H1 (cell line): ENCODE measurements at regions of chr10 and their contacts with region 1.

Region 1: DNA sequence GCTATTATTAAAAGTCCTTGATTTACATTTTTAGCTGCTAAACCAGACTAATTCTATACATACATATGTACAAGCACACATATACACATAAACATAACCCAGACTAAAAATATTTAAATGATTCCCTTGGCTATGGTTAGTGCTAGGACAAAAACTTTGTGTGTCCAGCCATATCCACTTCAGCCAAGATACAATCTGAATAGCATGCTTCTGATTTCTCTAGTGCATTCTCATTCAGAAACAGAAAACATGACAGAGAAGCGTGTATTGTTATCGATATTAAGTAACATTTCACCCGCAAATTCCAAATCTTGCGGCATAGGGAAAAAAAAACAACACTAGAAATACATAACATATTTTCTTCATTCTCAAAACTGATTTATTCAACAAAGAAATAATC is 569.3 kb downstream of the KCNMA1 start:
- DNase-seq: no peak
- H3K4me3 ChIP-seq: no peak overlapping the region
- H3K27ac ChIP-seq: no peak overlapping the region
- H3K4me1 ChIP-seq: no peaks in the 10 kb centered on the region; a peak in 1 of 7 replicates
- H3K27me3 ChIP-seq: no peaks in the 10 kb centered on the region
- CTCF ChIP-seq: no peak
- EP300 ChIP-seq: no peak
- POLR2A ChIP-seq: no peak
- RAD21 ChIP-seq: no peak

Region 2: GRCh38 chr10:77051837-77052236 is 16.4 kb before region 1 on chr10:
- CTCF ChIA-PET with region 1: no interaction called
- POLR2A ChIA-PET with region 1: no interaction called
- DNase-seq: no peak
- H3K4me3 ChIP-seq: no peak overlapping the region
- H3K27ac ChIP-seq: no peak overlapping the region
- H3K4me1 ChIP-seq: peaks cover 0 to 4% (median 2%) of the 10 kb centered on the region in 4 experiments; a peak in 3 of 7 replicates
- H3K27me3 ChIP-seq: peaks cover 0 to 1% (median 0%) of the 10 kb centered on the region in 4 experiments; a peak in 1 of 7 replicates
- CTCF ChIP-seq: no peak
- EP300 ChIP-seq: no peak
- POLR2A ChIP-seq: no peak
- RAD21 ChIP-seq: no peak

Region 3: GRCh38 chr10:77082601-77083252 is 14.5 kb after region 1 on chr10:
- CTCF ChIA-PET with region 1: interaction called, 25 read pairs
- POLR2A ChIA-PET with region 1: interaction called, 3 read pairs
- DNase-seq: peak; percentile 46 to 79
- H3K4me3 ChIP-seq: no peak overlapping the region
- H3K27ac ChIP-seq: no peak overlapping the region
- H3K4me1 ChIP-seq: peaks cover 7 to 18% (median 13%) of the 10 kb centered on the region in 4 experiments
- H3K27me3 ChIP-seq: no peaks in the 10 kb centered on the region
- CTCF ChIP-seq: peak; percentile 68 to 85 (median 70)
- EP300 ChIP-seq: no peak
- POLR2A ChIP-seq: no peak
- RAD21 ChIP-seq: peak; percentile 28 to 46; a peak in 3 of 4 replicates